ENCODE measurements at regions of chr1 and their contacts with region 1.

Region 1: DNA sequence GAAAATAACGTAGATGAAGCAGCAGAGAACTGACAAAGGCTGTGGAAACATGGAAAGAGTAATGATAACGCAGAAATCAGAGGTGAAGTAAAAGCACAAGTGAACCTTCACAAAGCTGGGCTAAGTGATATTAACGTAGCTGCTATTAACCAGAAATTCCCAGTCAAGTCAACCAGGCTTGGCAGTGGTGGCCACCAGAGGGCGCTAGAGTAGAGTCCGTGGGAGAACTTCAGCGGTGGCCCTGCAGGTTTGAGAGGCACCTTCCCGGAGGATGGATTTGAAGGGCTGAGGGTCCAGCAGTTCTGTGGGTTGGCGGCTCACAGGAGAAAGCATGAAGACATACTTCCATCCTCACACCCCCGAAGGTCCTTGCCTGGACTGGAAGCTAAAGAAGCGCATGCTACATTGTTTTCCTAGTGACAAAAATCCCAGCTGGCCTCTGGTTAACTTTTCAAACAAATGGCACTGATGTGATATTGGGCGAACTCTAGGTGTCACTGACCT is 81.7 kb upstream of the ZNF648 start:
- DNase-seq: peak; percentile 27
- ATAC-seq: peak; percentile 73
- H3K4me3 ChIP-seq: no peak overlapping the region
- H3K27ac ChIP-seq: no peak overlapping the region
- H3K4me1 ChIP-seq: peaks cover 9% of the 10 kb centered on the region
- H3K27me3 ChIP-seq: no peaks in the 10 kb centered on the region
- CTCF ChIP-seq: peak; percentile 89 to 97 (median 91); a peak in 5 of 6 replicates
- EP300 ChIP-seq: no peak
- POLR2A ChIP-seq: no peak
- RAD21 ChIP-seq: peak; percentile 95

Region 2: DNA sequence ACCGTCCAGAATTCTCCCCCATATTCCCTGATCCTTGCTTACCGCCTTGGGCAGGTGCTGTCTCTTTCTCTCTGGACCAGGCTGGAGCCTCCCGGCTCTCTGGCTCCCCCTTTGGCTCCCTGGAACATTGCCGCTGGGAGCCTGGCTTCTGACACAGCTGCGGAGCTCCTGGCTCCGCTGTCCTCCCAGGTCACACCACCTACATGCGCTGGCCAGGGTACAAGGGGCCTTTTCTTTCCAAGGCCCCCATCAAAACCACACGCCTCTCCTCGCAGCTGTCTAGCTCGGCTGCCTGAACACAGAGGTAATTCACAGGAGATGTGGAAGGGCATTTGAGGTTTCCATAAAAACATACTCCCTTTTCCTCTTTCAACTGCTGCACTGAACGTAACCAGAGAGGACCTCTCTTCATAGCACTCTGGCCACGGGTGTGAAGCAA is 74.2 kb before region 1 on chr1:
- CTCF ChIA-PET with region 1: no interaction called
- POLR2A ChIA-PET with region 1: no interaction called
- RAD21 ChIA-PET with region 1: no interaction called
- SMC1A ChIA-PET with region 1: no interaction called
- in situ Hi-C with region 1: no loop called
- intact Hi-C with region 1: no loop called
- DNase-seq: no peak
- ATAC-seq: peak; percentile 81
- H3K4me3 ChIP-seq: no peak overlapping the region
- H3K27ac ChIP-seq: no peak overlapping the region
- H3K4me1 ChIP-seq: no peaks in the 10 kb centered on the region
- H3K27me3 ChIP-seq: peaks cover 0 to 2% of the 10 kb centered on the region in 2 experiments; a peak in 2 of 4 replicates
- CTCF ChIP-seq: peak; percentile 39 to 68 (median 44)
- EP300 ChIP-seq: no peak
- POLR2A ChIP-seq: no peak
- RAD21 ChIP-seq: no peak

Region 3: DNA sequence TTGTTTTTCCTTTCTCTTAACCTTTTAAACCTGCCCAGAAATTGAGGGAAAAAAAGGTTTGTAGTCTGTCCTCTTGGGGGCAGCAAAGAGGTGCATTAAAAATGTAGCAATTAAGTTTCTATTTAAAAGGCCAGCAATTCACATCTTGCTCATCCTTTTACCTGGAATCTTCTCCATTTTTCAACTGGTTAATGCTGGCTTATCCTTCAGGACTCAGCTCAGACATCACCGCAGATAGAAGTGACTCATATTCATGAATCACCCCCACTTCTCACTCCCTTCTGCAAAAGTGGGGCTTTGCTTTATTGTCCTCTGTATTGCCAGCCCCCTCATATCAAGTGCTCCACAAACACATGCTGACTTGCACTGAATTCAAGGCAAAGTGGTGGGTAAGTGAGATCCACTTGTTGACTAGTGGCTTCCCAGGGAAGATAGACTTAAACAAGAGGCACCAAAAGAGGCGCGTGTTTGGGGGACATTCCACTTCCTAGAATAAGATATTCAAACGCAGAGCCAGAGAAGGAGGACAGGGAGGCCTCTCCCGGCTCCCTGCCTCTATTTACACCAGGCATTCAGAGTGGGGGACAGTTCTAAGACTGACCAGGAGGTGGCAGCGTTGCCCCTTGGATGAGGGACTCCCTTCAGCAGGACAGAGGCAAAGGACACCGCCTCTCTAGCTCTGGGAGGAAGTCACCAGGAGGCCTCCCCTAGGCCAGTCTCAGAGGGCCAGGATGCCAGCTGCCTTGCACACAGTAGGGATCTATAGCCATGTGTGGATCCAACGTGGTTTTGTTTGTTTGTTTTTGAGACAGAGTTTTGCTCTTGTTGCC is 58.5 kb before region 1 on chr1:
- CTCF ChIA-PET with region 1: interaction called, 26 read pairs
- POLR2A ChIA-PET with region 1: no interaction called
- RAD21 ChIA-PET with region 1: interaction called, 16 read pairs
- SMC1A ChIA-PET with region 1: interaction called, 17 read pairs
- in situ Hi-C with region 1: no loop called
- intact Hi-C with region 1: loop called (anchors 2 kb)
- DNase-seq: no peak
- ATAC-seq: peak; percentile 94
- H3K4me3 ChIP-seq: no peak overlapping the region
- H3K27ac ChIP-seq: no peak overlapping the region
- H3K4me1 ChIP-seq: no peaks in the 10 kb centered on the region
- H3K27me3 ChIP-seq: no peaks in the 10 kb centered on the region
- CTCF ChIP-seq: peak; percentile 67 to 75 (median 74)
- EP300 ChIP-seq: no peak
- POLR2A ChIP-seq: no peak
- RAD21 ChIP-seq: peak; percentile 89

Region 4: GRCh38 chr1:182159443-182159842 is 16.2 kb after region 1 on chr1:
- CTCF ChIA-PET with region 1: interaction called, 11 read pairs
- POLR2A ChIA-PET with region 1: no interaction called
- RAD21 ChIA-PET with region 1: no interaction called
- SMC1A ChIA-PET with region 1: interaction called, 5 read pairs
- in situ Hi-C with region 1: no loop called
- intact Hi-C with region 1: no loop called
- DNase-seq: no peak
- ATAC-seq: no peak
- H3K4me3 ChIP-seq: no peak overlapping the region
- H3K27ac ChIP-seq: no peak overlapping the region
- H3K4me1 ChIP-seq: no peaks in the 10 kb centered on the region
- H3K27me3 ChIP-seq: no peaks in the 10 kb centered on the region
- CTCF ChIP-seq: no peak
- EP300 ChIP-seq: no peak
- POLR2A ChIP-seq: no peak
- RAD21 ChIP-seq: no peak

Region 5: DNA sequence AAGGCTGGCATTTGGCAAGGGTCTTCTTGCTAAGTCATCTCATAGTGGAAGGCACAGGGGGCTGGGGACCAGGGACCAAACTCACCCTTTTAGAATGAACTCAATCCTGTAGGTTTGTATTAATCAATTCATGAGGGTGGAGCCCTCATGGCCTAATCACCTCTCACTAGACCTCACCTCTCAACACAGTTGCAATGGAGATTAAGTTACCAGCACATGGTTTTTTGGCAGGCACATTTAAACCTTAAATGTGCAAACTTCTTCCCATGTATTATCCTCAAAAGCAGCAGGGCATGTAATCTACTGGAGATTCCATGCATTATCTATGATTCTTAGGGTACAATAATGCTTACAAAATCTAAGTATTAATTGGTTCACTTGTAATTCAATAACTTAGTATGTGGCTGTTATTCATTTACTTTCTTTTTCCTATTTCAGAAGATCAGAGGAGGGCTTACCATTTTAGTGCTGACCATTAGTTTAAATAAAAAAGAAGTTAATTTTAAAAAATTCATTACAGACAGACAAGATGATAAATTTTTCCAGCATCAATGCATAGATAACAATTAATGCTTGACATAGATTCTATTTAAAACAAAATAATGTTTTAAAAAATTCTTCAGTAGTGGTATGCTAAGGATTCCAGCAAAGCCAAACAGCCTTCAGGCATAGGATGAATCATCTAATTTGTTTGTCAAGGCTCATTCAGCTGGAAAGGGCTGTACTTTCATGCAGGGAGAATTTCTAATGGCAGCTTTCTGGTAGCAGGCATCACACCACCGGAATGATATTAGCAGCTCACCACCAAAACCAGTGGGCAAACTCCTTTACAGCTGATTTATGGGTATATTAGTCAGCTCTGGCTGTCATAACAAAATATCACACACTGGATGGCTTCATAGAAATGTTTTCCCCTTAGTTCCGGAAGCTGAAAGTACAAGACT is 42.9 kb after region 1 on chr1:
- CTCF ChIA-PET with region 1: interaction called, 22 read pairs
- POLR2A ChIA-PET with region 1: interaction called, 3 read pairs
- RAD21 ChIA-PET with region 1: interaction called, 6 read pairs
- SMC1A ChIA-PET with region 1: interaction called, 29 read pairs
- in situ Hi-C with region 1: no loop called
- intact Hi-C with region 1: no loop called
- DNase-seq: no peak
- ATAC-seq: no peak
- H3K4me3 ChIP-seq: no peak overlapping the region
- H3K27ac ChIP-seq: no peak overlapping the region
- H3K4me1 ChIP-seq: no peaks in the 10 kb centered on the region
- H3K27me3 ChIP-seq: no peaks in the 10 kb centered on the region
- CTCF ChIP-seq: no peak
- EP300 ChIP-seq: no peak
- POLR2A ChIP-seq: no peak
- RAD21 ChIP-seq: no peak

Region 6: GRCh38 chr1:182288749-182289604 is 145.8 kb after region 1 on chr1:
- CTCF ChIA-PET with region 1: interaction called, 10 read pairs
- POLR2A ChIA-PET with region 1: no interaction called
- RAD21 ChIA-PET with region 1: interaction called, 3 read pairs
- SMC1A ChIA-PET with region 1: interaction called, 4 read pairs
- in situ Hi-C with region 1: no loop called
- intact Hi-C with region 1: no loop called
- DNase-seq: no peak
- ATAC-seq: no peak
- H3K4me3 ChIP-seq: no peak overlapping the region
- H3K27ac ChIP-seq: no peak overlapping the region
- H3K4me1 ChIP-seq: no peaks in the 10 kb centered on the region
- H3K27me3 ChIP-seq: peaks cover 0 to 5% of the 10 kb centered on the region in 2 experiments; a peak in 3 of 4 replicates
- CTCF ChIP-seq: no peak
- EP300 ChIP-seq: no peak
- POLR2A ChIP-seq: no peak
- RAD21 ChIP-seq: no peak

Region 7: GRCh38 chr1:182391362-182392044 is 248.3 kb after region 1 on chr1 and contains the start of gene GLUL:
- CTCF ChIA-PET with region 1: interaction called, 418 read pairs
- POLR2A ChIA-PET with region 1: interaction called, 24 read pairs
- RAD21 ChIA-PET with region 1: interaction called, 282 read pairs
- SMC1A ChIA-PET with region 1: interaction called, 303 read pairs
- in situ Hi-C with region 1: loop called (anchors 5 kb)
- intact Hi-C with region 1: loop called (anchors 1 kb)
- DNase-seq: no peak
- ATAC-seq: peak; percentile 86
- H3K4me3 ChIP-seq: peak within 1 kb of the TSS; percentile 85
- H3K27ac ChIP-seq: peak within 1 kb of the TSS; percentile 71
- H3K4me1 ChIP-seq: peaks cover 11% of the 10 kb centered on the region
- H3K27me3 ChIP-seq: no peaks in the 10 kb centered on the region
- CTCF ChIP-seq: peak in 1 of 3 experiments; percentile 36; a peak in 1 of 6 replicates
- EP300 ChIP-seq: no peak
- POLR2A ChIP-seq: peak; percentile 98
- RAD21 ChIP-seq: no peak
- polyA plus RNA-seq, gene GLUL: 166 to 392 TPM

Region 8: DNA sequence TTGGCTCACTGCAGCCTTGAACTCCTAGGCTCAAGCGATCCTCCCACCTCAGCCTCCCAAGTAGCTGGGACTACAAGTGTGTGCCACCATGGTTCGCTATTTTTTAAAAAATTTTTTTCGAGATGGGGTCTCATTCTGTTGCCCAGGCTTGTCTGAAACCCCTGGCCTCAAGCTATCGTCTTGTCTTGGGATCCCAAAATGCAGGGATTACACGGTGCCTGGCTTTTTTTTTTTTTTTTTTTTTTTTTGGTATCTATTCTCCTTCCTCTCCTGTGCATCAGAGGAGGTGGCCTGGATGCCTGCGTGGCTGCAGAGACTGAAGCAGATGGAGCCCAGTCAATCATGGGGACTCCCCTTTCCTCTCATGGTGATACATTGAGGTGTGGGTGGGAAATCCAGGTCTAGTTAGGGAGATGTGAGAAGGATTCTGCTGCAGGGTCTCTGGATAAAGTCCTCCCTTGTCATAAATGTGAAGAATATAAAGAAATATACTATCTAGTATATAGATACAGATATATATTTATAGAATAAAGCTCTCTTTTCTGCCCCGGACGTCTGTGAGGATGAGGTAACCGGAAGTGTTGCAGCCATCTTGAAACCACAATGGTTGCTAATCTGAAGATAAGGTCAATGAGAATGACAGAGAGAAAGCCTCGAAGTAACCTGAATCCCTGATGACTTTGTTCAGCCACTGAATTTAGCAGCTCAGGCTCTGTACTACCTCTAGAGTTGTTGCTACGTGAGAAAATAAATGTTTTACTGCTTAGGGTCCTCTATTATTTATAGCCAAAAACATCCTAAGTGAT is 287.3 kb after region 1 on chr1:
- CTCF ChIA-PET with region 1: interaction called, 16 read pairs
- POLR2A ChIA-PET with region 1: no interaction called
- RAD21 ChIA-PET with region 1: interaction called, 14 read pairs
- SMC1A ChIA-PET with region 1: interaction called, 11 read pairs
- in situ Hi-C with region 1: no loop called
- intact Hi-C with region 1: no loop called
- DNase-seq: peak; percentile 50
- ATAC-seq: peak; percentile 52
- H3K4me3 ChIP-seq: no peak overlapping the region
- H3K27ac ChIP-seq: peak overlapping the region; percentile 48
- H3K4me1 ChIP-seq: peaks cover 34% of the 10 kb centered on the region
- H3K27me3 ChIP-seq: no peaks in the 10 kb centered on the region
- CTCF ChIP-seq: no peak
- EP300 ChIP-seq: 0 out of 4 replicates have a peak, but pooled peaks of 1 of the 2 experiments have one; percentile 26
- POLR2A ChIP-seq: no peak
- RAD21 ChIP-seq: no peak